ENCODE measurements at regions of chr12 and their contacts with region 1.

Region 1: DNA sequence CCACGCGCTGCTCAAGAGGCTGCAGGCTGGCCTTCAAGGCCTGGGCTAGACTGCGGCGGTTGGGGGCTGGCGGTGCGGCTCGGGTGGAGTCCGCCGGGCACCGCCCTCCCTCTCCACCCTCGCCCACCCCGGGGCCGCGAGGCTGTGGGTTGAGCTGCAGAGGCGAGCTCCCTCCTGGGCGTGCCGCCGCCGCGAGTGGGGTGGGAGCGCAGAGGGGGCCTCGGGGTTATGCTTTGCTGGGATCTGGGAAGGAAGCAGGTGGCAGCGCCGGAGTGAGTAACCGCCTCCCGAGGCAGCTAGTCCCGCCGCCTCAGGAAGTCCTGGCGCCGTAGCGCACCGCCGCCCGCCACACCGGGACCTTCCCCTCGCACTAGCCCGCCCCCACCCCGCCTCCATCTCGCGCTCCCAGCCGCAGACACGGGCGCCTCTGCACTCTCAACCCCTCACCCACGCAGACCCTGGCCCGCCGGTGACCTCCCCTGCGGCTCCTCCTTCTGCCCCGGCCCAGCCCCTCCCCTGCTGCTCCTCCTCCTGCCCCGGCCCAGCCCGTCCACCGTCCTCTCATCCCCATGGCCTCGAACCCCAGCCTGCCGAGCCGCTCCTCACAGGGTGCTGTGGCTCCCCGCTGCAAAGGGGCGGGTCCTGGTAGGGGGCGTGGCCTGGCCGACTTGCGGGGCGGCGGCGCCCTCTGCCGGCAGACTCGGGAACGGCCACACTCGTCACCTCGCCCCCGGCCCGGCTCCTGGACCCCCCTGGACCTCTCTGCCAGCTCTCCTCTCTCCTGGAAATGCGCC is 16.6 kb downstream of the TAMALIN start:
- DNase-seq: peak; percentile 96
- H3K4me3 ChIP-seq: peak overlapping the region; percentile 49 to 66
- H3K27ac ChIP-seq: peak overlapping the region in 1 of 2 experiments; percentile 12; a peak in 1 of 4 replicates
- H3K4me1 ChIP-seq: peaks cover 5 to 23% of the 10 kb centered on the region in 2 experiments; a peak in 1 of 4 replicates
- H3K27me3 ChIP-seq: no peaks in the 10 kb centered on the region
- CTCF ChIP-seq: peak; percentile 90
- EP300 ChIP-seq: no peak; a peak in 1 of 4 replicates
- RAD21 ChIP-seq: peak; percentile 80

Region 2: DNA sequence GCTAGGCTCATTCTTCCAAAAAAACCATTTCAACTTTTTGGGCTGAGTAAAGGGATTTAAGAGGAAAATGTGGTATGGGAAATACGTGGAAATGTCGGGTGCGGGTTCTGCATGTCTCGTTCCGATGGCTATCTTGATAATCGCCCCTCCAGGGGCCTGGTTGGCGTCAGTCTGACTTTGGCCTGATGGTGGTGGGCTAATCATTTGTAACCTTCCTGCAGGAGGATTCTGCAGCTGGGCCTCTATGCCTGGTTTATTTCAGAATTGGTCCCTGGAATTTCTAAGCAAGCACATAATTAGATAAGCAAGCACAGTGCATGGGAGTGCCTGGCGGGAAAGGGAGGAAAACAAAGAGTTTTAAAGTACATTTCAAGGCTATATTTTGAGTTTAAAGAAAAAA is 613.5 kb before region 1 on chr12:
- CTCF ChIA-PET with region 1: no interaction called
- POLR2A ChIA-PET with region 1: no interaction called
- DNase-seq: peak; percentile 73
- H3K4me3 ChIP-seq: no peak overlapping the region
- H3K27ac ChIP-seq: peak overlapping the region in 1 of 2 experiments; percentile 85; a peak in 2 of 4 replicates
- H3K4me1 ChIP-seq: peaks cover 0 to 39% of the 10 kb centered on the region in 2 experiments; a peak in 2 of 4 replicates
- H3K27me3 ChIP-seq: no peaks in the 10 kb centered on the region
- CTCF ChIP-seq: no peak
- EP300 ChIP-seq: peak in 1 of 2 experiments; percentile 99; a peak in 2 of 4 replicates
- RAD21 ChIP-seq: peak; percentile 51; the same call in 1 of the 2 replicates

Region 3: DNA sequence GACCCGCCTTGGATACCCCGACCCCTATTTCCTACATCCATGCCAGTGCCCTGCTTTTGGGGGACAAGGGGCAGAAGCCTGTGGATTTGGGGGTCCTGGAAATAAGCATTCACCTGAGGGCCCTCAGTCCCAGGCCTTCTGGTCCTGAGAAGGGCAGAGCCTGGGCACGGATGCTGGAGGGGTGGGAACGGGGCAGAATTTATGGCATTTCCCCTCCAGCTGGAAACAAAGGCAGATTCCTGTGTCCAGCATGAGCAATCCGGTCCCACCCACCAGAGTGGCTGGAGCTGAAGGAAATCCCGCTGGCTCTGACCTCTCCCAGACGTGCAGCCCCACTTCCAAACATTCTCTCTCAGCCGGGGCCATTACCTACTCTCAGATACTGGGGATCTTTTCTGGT is 126.2 kb before region 1 on chr12:
- CTCF ChIA-PET with region 1: interaction called, 111 read pairs
- POLR2A ChIA-PET with region 1: no interaction called
- DNase-seq: peak; percentile 12
- H3K4me3 ChIP-seq: no peak overlapping the region
- H3K27ac ChIP-seq: no peak overlapping the region
- H3K4me1 ChIP-seq: peaks cover 0 to 9% of the 10 kb centered on the region in 2 experiments; a peak in 1 of 4 replicates
- H3K27me3 ChIP-seq: no peaks in the 10 kb centered on the region
- CTCF ChIP-seq: no peak
- EP300 ChIP-seq: no peak
- RAD21 ChIP-seq: no peak

Region 4: GRCh38 chr12:51923501-51924271 is 99.7 kb before region 1 on chr12:
- CTCF ChIA-PET with region 1: interaction called, 10 read pairs
- POLR2A ChIA-PET with region 1: no interaction called
- DNase-seq: peak; percentile 58
- H3K4me3 ChIP-seq: no peak overlapping the region; a peak in 1 of 4 replicates
- H3K27ac ChIP-seq: no peak overlapping the region
- H3K4me1 ChIP-seq: peaks cover 0 to 39% of the 10 kb centered on the region in 2 experiments; a peak in 1 of 4 replicates
- H3K27me3 ChIP-seq: no peaks in the 10 kb centered on the region
- CTCF ChIP-seq: peak; percentile 52
- EP300 ChIP-seq: no peak
- RAD21 ChIP-seq: no peak

Region 5: DNA sequence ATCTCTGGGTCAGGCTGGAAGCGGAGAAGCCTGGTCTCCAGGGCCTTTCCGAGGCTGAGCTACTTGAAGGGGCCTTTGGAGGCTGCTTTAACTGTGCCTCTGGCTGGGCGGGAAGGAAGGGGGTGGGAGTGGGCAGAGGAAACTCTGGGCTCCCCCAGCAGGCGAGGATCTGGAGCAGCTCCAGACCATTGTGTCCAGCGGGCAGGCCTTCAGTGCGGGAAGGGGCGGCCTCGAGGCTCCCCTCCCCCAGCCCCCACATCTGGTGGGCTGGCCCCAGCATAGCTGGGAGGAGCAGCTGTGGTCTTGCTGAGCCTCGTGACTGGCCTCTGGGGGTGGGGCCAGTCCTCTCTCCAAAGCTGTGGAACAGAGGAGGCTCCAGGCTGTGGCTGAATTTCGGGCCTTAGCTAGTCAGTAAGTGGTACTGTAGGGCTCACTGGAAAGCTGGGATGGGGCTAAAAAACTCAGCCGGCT is 13.2 kb before region 1 on chr12:
- CTCF ChIA-PET with region 1: interaction called, 526 read pairs
- POLR2A ChIA-PET with region 1: interaction called, 12 read pairs
- DNase-seq: peak; percentile 88
- H3K4me3 ChIP-seq: no peak overlapping the region
- H3K27ac ChIP-seq: peak overlapping the region; percentile 19 to 71; a peak in 3 of 4 replicates
- H3K4me1 ChIP-seq: peaks cover 0 to 32% of the 10 kb centered on the region in 2 experiments; a peak in 2 of 4 replicates
- H3K27me3 ChIP-seq: no peaks in the 10 kb centered on the region
- CTCF ChIP-seq: no peak
- EP300 ChIP-seq: no peak
- RAD21 ChIP-seq: no peak

Region 6: GRCh38 chr12:52121824-52122539 is 98.6 kb after region 1 on chr12:
- CTCF ChIA-PET with region 1: interaction called, 247 read pairs
- POLR2A ChIA-PET with region 1: interaction called, 3 read pairs
- DNase-seq: peak; percentile 87
- H3K4me3 ChIP-seq: no peak overlapping the region
- H3K27ac ChIP-seq: no peak overlapping the region
- H3K4me1 ChIP-seq: peaks cover 0 to 26% of the 10 kb centered on the region in 2 experiments; a peak in 1 of 4 replicates
- H3K27me3 ChIP-seq: peaks cover 4% of the 10 kb centered on the region; the same call in 1 of the 2 replicates
- CTCF ChIP-seq: peak; percentile 77
- EP300 ChIP-seq: peak in 1 of 2 experiments; percentile 9; a peak in 1 of 4 replicates
- RAD21 ChIP-seq: peak; percentile 78

Region 7: GRCh38 chr12:52879394-52880351 is 856.3 kb after region 1 on chr12:
- CTCF ChIA-PET with region 1: interaction called, 17 read pairs
- POLR2A ChIA-PET with region 1: no interaction called
- DNase-seq: peak; percentile 88
- H3K4me3 ChIP-seq: peak overlapping the region; percentile 10 to 51; a peak in 1 of 4 replicates
- H3K27ac ChIP-seq: no peak overlapping the region
- H3K4me1 ChIP-seq: peaks cover 0 to under 1% of the 10 kb centered on the region in 2 experiments; a peak in 1 of 4 replicates
- H3K27me3 ChIP-seq: no peaks in the 10 kb centered on the region
- CTCF ChIP-seq: peak; percentile 74
- EP300 ChIP-seq: no peak
- RAD21 ChIP-seq: peak; percentile 93

Measured in SK-N-SH (cell line).